Panc1 (cell line): ENCODE measurements at regions of chr6 and their contacts with region 1.

Region 1: GRCh38 chr6:55980627-55981211 is 105.3 kb upstream of the BMP5 start:
- DNase-seq: peak; percentile 22
- ATAC-seq: peak; percentile 78
- H3K4me3 ChIP-seq: no peak overlapping the region
- H3K27ac ChIP-seq: no peak overlapping the region; the same call in 1 of the 2 replicates
- H3K4me1 ChIP-seq: no peaks in the 10 kb centered on the region
- H3K27me3 ChIP-seq: no peaks in the 10 kb centered on the region
- CTCF ChIP-seq: peak; percentile 76; the same call in 1 of the 2 replicates

Region 2: DNA sequence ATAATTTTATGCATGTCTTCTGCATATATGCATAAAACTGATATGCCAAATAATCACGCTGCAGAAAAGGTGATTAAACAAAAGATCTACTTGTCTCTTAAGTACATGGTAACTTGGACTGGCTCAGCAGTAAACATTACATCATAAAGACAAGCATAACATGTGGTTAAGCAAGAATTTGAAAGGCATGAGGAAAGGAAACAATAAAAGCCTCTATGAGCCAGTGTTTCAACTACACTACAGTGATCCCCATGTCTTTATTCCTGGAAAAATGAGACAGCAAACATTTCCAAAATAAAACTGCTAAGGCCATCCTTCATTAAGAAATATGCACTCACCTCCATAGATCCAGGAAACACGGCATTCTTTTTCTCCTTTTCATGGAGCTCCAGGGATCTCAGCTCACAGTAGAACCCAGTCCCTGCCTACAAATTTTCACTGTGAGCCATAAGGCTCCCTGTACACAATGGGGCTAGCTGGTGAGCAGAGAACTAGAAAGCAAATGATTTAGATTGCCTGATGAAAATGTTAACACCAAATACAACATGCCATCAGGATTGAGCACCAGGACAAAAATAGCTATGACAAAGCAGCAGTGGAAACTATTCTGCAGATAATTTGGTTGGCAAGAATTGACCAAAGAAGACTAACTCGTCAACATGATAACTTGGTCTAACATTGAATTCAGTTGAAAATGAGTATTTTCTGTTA is 110.6 kb after region 1 on chr6:
- CTCF ChIA-PET with region 1: no interaction called
- POLR2A ChIA-PET with region 1: no interaction called
- in situ Hi-C with region 1: no loop called
- intact Hi-C with region 1: loop called (anchors 10 kb)
- DNase-seq: peak; percentile 77
- ATAC-seq: peak; percentile 94
- H3K4me3 ChIP-seq: peak overlapping the region in 1 of 2 experiments; percentile 28; a peak in 2 of 4 replicates
- H3K27ac ChIP-seq: peak overlapping the region; percentile 84
- H3K4me1 ChIP-seq: peaks cover 6% of the 10 kb centered on the region
- H3K27me3 ChIP-seq: no peaks in the 10 kb centered on the region
- CTCF ChIP-seq: no peak

Region 3: GRCh38 chr6:56292505-56293181 is 311.9 kb after region 1 on chr6:
- CTCF ChIA-PET with region 1: interaction called, 6 read pairs
- POLR2A ChIA-PET with region 1: interaction called, 3 read pairs
- in situ Hi-C with region 1: no loop called
- intact Hi-C with region 1: loop called (anchors 1 kb)
- DNase-seq: peak; percentile 72
- ATAC-seq: peak; percentile 90
- H3K4me3 ChIP-seq: no peak overlapping the region
- H3K27ac ChIP-seq: peak overlapping the region; percentile 59; the same call in 1 of the 2 replicates
- H3K4me1 ChIP-seq: peaks cover 8% of the 10 kb centered on the region; the same call in 1 of the 2 replicates
- H3K27me3 ChIP-seq: no peaks in the 10 kb centered on the region
- CTCF ChIP-seq: peak; percentile 77

Region 4: DNA sequence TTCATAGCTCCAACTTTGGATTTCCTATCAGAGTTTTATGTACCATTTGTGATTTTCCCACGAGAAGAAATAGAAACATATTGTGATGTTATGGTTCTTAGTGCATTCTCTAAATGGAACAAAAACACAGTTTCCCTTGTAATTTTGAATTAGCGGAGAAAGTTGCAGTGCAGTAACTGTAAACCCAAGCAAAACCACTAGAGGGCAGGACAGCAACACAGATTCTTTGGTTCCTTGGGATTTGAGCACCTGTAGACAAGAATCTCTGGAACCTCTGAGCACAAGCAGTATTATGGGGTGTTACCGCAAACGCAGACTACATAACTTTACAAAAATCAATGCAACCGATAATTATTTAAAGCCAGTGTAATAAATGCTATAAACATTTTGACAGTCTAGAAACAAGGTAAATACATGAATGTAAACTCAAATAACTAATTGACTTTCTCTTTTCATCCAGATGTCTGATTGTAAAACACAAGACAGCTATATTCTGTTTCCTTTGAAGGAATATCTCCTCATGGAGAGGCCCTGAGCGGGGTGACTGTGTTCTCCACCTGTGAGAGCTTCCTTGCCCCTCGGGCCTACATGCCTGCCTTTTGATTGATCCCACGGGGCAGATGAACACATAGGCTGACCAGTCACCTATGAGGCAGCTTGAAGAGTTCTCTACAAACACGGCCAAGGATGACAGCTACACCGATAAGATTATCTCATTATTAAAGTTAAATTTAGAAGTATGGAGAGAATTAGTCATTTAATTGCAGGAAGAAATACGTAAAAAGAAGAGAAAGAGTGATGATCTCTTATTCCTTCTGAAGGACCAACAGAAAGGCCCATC is 334.2 kb after region 1 on chr6:
- CTCF ChIA-PET with region 1: interaction called, 11 read pairs
- POLR2A ChIA-PET with region 1: no interaction called
- in situ Hi-C with region 1: no loop called
- intact Hi-C with region 1: no loop called
- DNase-seq: peak; percentile 65
- ATAC-seq: peak; percentile 80
- H3K4me3 ChIP-seq: no peak overlapping the region
- H3K27ac ChIP-seq: no peak overlapping the region
- H3K4me1 ChIP-seq: no peaks in the 10 kb centered on the region
- H3K27me3 ChIP-seq: peaks cover 12% of the 10 kb centered on the region; the same call in 1 of the 2 replicates
- CTCF ChIP-seq: peak; percentile 91